Posterior cingulate gyrus (tissue), 11 donors: ENCODE measurements at regions of chr17 and their contacts with region 1.

Region 1: GRCh38 chr17:9886141-9886930 is 18.7 kb downstream of the RCVRN start:
- DNase-seq: peak in 4 of 10 donors; percentile 30 to 67 (median 34)

Region 2: DNA sequence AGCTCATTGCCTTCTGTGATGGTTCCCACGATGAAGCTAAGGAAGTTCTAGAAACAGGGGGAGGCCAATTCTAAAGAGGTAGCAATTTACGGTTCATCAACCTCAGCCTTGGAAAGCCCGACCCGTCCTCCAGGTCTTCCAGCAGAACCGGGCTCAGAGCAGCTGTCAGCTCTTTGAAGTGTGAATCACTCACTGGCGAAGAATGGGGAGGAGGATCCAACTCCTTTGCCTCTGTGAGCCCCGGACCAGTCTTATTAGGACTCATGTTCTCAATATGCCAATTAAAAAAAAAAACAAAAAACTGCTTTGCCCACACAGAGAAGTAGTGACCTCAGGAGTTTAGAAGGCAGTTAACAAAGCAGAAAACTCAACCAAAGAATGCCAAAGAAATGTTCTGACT is 342.1 kb before region 1 on chr17:
- intact Hi-C with region 1: no loop called
- DNase-seq: no peak

Region 3: GRCh38 chr17:9768381-9768934 is 117.9 kb before region 1 on chr17:
- intact Hi-C with region 1: no loop called
- DNase-seq: no peak

Region 4: DNA sequence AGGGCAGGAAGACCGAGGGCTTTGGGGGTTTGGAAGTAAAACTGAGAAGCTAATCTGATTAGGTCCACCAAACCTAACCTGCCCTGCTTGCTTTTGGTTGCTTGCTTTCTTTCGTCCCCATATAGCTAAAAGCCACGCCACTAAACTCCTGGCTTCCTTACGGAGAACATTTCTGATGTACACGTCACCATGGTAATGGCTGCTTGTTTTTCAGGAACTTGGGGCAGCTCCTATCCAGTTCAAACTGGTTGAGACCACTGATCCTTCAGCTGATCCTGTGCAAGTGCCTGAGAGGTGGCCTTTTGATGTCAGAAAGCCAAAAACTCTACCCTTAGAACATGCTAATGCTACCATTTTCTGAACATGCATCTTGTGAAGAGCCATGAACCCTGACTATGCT is 80.6 kb before region 1 on chr17:
- intact Hi-C with region 1: loop called (anchors 1 kb)
- DNase-seq: no peak